ENCODE measurements at regions of chr5 and their contacts with region 1.

Region 1: GRCh38 chr5:143403593-143404415 is at the start of gene NR3C1:
- DNase-seq: peak; percentile 95
- H3K4me3 Mint-ChIP-seq: peak within 1 kb of the TSS; percentile 93
- H3K27ac Mint-ChIP-seq: peak within 1 kb of the TSS; percentile 98
- H3K4me1 Mint-ChIP-seq: peaks cover 44% of the 10 kb centered on the region
- H3K27me3 Mint-ChIP-seq: no peaks in the 10 kb centered on the region
- total RNA-seq, gene NR3C1: 62.2 and 64.7 TPM in 2 replicates

Region 2: DNA sequence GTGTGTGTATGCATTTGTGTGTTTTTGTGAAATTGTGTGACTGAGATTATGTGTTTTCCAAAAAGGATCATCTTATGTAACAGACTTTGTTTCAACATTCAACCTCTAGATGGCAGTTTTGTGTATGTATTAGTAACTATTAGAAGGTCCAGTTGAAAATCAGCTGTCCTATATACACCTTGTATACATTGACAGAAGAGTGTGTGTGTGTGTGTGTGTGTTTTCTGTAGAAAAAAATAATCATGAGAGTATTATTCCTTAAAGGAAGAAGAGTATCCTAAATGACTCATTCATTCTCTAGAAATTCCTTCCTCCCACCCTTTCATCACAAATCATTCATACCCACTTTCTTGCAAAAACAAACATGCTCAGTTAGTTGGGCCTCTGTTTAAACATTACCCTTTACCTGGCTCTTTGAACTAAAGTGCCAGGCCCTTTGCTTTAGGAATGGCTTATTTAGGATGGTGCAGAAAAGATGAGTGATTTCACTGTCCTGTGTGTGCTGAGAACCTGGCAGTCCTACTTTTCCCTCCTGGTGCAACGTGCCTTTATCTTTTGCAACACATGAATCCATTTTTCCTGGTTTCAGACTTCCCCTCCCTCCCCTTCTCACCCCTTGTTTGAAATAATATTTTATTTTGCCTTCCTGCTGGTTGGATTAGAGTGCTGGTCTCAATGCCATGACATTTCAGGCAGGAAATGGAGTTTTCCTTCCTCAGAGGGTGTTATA is 481.4 kb before region 1 on chr5:
- intact Hi-C with region 1: loop called (anchors 2 kb)
- DNase-seq: no peak
- H3K4me3 Mint-ChIP-seq: no peak overlapping the region
- H3K27ac Mint-ChIP-seq: no peak overlapping the region
- H3K4me1 Mint-ChIP-seq: peaks cover 36% of the 10 kb centered on the region
- H3K27me3 Mint-ChIP-seq: no peaks in the 10 kb centered on the region

Region 3: DNA sequence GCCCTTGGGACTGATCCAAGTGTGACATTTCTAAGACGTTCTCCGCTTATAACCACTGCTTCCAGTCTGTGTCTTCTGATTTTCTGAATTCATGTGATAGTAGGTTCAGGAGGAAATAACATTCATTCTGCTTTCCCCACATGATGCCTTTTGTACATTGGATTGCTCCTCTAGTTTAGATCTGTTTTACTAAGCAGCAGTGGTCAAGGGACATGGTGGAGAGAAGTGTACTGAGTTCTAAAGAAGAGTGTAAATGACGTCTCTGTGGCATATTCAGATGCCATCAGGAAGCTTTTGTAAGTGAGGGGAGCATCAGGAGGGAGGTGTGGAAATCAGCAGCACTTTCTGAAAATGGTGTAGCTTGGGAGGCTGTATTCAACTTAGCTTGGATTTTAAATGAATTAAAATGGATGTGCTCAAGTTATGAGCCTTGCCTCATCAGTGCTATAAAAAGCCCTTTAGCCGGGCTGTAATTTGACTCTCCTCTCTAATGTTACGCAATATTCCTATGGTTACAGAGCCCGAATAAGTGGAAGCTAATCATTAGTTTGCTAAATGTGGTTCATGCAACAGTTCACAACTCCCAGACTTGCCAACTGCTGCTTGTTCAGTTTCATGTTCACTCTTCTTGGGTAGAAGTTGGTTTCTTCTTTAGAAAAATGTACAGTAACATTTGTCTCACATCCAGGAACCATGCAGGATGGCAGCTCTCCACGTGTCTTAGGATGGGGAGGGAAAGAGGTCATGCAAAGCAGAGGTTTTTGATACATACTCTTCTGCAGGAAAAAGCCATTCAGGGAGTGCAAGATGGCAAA is 352.4 kb before region 1 on chr5:
- intact Hi-C with region 1: loop called (anchors 1 kb)
- DNase-seq: no peak
- H3K4me3 Mint-ChIP-seq: no peak overlapping the region
- H3K27ac Mint-ChIP-seq: peak overlapping the region; percentile 70
- H3K4me1 Mint-ChIP-seq: peaks cover 62% of the 10 kb centered on the region
- H3K27me3 Mint-ChIP-seq: no peaks in the 10 kb centered on the region

Region 4: DNA sequence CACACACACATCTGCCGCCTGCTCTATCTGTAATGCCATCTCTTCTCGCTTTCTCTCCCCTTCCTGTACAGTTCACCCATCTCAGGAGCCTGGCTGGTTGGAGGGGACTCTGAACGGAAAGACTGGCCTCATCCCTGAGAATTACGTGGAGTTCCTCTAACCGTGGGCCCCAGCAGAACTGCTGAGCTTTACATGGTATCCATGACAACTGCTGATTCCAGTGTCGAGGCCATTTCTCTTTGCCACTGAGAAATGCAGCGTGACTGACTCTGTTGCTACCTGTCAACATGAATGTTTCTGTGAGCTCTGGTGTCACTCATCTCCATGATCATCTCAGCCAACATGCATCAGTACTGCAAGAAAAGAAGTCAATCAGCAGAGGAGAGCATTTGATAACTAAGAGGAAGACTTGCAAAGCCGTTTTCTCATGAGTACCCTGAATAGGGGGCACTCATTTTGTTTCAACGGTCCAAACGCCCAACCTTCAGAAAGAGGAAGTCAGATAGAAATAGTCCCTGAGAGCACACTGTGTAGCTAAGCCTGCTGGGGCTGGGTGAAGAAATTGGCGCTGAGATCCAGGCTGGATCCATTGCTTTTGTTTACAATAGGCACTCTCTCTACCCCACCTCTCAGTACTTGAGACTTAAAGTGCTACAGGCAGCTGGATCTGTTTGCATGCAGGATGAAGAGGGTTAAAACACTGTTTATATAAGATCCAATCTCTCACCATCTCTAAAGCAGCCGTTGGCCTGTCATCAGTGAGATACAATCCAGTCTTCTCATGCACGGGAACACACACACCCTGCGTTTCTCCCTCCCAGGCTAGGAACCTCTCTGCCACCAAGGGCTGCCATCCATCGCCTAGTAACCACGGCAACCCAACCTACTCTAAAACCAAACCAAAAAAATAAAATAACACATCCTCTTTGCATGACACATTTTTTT is 181.2 kb before region 1 on chr5:
- intact Hi-C with region 1: loop called (anchors 2 kb)
- DNase-seq: peak; percentile 87
- H3K4me3 Mint-ChIP-seq: peak overlapping the region; percentile 71
- H3K27ac Mint-ChIP-seq: peak overlapping the region; percentile 95
- H3K4me1 Mint-ChIP-seq: peaks cover 56% of the 10 kb centered on the region
- H3K27me3 Mint-ChIP-seq: no peaks in the 10 kb centered on the region

Region 5: GRCh38 chr5:143386725-143387124 is 17.1 kb before region 1 on chr5:
- intact Hi-C with region 1: loop called (anchors 1 kb)
- DNase-seq: peak; percentile 60
- H3K4me3 Mint-ChIP-seq: peak overlapping the region; percentile 9
- H3K27ac Mint-ChIP-seq: no peak overlapping the region
- H3K4me1 Mint-ChIP-seq: peaks cover 42% of the 10 kb centered on the region
- H3K27me3 Mint-ChIP-seq: no peaks in the 10 kb centered on the region

Region 6: GRCh38 chr5:143605403-143606005 is 201.7 kb after region 1 on chr5:
- intact Hi-C with region 1: loop called (anchors 1 kb)
- DNase-seq: peak; percentile 83
- H3K4me3 Mint-ChIP-seq: peak overlapping the region; percentile 68
- H3K27ac Mint-ChIP-seq: peak overlapping the region; percentile 94
- H3K4me1 Mint-ChIP-seq: peaks cover 31% of the 10 kb centered on the region
- H3K27me3 Mint-ChIP-seq: peaks cover 4% of the 10 kb centered on the region

Region 7: DNA sequence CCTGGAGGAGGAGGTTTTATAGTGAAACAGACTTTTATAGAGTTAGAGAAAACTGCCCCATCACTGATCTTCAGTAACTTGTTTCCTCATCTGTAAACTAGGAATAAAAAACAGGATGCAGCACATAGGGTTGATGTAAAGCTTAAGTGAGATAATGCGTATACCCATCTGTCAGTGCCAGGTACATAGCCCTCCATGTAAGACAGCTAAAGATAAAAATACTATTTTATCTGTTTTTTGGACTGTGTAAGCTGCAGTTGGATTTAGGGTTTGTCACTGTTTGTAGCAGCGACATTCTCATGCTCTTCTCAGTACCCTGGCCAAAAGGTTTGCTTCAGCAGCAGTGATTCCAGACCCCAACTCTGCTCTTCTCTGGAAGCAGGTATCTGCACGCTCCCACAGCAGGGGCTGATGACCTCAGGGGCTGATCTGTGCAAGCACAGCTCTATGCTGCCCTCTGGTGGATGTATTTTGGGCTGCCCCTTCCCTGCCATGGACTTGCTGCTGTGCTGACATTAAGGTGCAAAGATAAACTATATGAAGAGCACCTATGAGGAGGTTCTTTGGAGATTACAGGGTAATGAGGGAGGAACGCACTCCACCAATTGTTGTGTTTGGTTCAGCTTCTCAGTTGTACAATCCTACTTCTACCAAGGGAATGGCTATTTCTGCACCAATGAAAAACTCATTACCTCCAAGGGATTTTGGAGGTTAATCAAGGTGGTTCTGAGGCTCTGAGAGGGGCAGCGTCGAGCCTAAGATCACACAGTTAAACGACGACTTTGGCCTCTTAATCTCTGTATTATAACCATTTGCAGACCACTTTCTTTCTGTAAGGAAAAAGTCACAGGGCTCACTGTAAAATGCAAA is 421.3 kb after region 1 on chr5:
- intact Hi-C with region 1: loop called (anchors 1 kb)
- DNase-seq: peak; percentile 95
- H3K4me3 Mint-ChIP-seq: no peak overlapping the region
- H3K27ac Mint-ChIP-seq: no peak overlapping the region
- H3K4me1 Mint-ChIP-seq: peaks cover 12% of the 10 kb centered on the region
- H3K27me3 Mint-ChIP-seq: no peaks in the 10 kb centered on the region